ENCODE measurements at regions of chr1 and their contacts with region 1.

Region 1: DNA sequence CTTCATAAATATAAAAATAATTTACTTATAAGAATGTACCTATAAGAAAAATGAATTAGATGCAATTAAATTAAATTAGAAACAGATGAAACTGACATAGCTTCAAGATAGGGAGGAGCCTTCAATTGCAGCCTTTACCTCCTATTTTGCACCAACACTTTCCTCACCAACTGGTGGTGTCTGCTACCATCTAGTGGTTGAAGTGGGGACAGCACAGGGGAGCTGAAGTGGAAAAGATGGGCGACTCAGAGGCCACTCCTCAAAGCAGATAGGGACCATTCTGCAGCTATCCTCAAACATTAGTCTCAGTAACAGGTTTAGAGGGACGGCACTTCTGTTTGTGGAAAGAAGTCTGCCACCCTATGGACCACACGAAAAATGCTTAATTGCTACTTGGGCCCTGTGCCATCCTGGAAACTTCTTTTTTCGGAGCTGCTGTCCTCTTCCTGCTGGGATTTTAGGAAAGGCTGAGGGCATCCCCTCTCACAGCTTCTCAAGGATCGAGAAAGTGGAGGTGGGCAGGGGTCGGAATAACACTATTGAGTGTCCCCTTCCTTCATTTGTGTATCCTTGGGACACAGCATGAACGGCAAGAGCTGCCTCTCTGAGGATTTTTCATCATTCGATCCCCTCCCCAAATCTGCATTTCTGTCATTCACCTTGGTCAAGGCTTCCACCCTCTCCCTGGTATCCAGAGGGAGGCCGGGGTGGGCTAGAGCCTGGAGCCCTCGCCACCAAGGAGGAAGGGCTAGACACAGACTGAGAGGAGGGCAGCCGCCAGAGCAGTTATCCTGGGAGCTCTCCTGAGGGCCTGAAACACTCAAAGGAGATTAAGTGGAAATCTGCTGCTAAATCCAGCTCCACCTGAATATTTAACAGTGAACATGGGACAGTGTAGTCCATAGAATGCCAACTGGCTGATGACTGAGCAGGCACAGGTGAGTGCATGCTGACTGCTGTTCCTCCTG is 9.6 kb downstream of the PROK1 start:
- DNase-seq: peak in 1 of 2 donors; percentile 91
- H3K4me3 ChIP-seq: no peak overlapping the region
- H3K27ac ChIP-seq: no peak overlapping the region
- H3K4me1 ChIP-seq: no peaks in the 10 kb centered on the region
- H3K27me3 ChIP-seq: no peaks in the 10 kb centered on the region
- CTCF ChIP-seq: peak; percentile 92 to 96 (median 95)

Region 2: GRCh38 chr1:110203021-110203661 is 257.4 kb before region 1 on chr1:
- intact Hi-C with region 1: loop called (anchors 1 kb)
- DNase-seq: peak in 1 of 2 donors; percentile 81
- H3K4me3 ChIP-seq: no peak overlapping the region
- H3K27ac ChIP-seq: no peak overlapping the region
- H3K4me1 ChIP-seq: no peaks in the 10 kb centered on the region
- H3K27me3 ChIP-seq: no peaks in the 10 kb centered on the region
- CTCF ChIP-seq: peak; percentile 70 to 94 (median 79)

Region 3: DNA sequence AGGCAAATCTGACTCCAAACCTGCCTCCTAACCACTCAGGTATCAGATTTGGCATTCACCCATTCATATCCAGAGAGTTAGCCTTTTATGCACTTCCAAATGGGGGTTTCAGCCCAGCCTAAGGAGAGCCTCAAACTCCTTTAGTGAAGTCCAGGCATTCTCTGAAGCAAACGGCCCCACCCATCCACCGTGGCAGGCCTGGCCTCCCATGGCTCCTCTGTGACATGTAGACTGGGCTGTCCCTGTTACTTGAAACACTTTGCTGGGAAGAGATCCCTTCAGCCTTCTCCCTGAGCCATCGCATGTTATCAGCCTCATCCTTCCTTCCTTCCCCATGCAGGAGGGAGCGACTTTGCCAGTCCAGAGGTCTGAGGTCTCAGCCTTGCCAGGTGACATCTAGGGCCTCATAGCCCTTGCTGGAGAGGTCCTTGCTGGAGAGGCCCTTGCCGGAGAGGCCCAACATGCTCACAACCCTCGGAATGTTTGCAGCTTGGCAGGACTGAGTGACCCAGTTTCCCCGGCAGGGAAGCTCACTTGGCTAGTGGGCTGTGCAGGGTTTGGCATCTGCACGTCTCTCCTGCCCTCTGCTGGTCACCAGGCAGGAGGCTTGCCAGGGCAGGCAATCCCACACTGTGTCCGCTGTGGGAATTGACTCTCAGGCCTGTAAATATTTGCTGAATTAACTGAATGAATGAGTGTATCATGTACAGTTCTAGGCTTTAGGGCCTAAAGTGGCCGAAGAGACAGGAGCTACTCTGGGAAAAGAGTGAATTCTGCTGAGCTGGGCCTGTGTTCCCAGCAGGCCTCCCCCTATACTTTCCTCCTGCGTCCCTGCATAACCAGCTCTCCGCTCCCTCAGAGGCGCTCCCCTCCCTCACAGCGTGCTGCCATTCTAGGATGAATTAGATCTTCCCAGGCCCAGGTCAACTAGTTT is 148.1 kb before region 1 on chr1:
- intact Hi-C with region 1: loop called (anchors 1 kb)
- DNase-seq: peak; percentile 26 to 80
- H3K4me3 ChIP-seq: no peak overlapping the region
- H3K27ac ChIP-seq: no peak overlapping the region
- H3K4me1 ChIP-seq: no peaks in the 10 kb centered on the region
- H3K27me3 ChIP-seq: no peaks in the 10 kb centered on the region
- CTCF ChIP-seq: peak; percentile 83 to 92 (median 91)

Region 4: GRCh38 chr1:110340207-110340468 is 120.4 kb before region 1 on chr1:
- intact Hi-C with region 1: no loop called
- DNase-seq: peak in 1 of 2 donors; percentile 65
- H3K4me3 ChIP-seq: peak overlapping the region; percentile 81 to 96
- H3K27ac ChIP-seq: peak overlapping the region; percentile 83 to 94
- H3K4me1 ChIP-seq: peaks cover 19 to 33% of the 10 kb centered on the region in 2 donors
- H3K27me3 ChIP-seq: no peaks in the 10 kb centered on the region
- CTCF ChIP-seq: no peak

Region 5: DNA sequence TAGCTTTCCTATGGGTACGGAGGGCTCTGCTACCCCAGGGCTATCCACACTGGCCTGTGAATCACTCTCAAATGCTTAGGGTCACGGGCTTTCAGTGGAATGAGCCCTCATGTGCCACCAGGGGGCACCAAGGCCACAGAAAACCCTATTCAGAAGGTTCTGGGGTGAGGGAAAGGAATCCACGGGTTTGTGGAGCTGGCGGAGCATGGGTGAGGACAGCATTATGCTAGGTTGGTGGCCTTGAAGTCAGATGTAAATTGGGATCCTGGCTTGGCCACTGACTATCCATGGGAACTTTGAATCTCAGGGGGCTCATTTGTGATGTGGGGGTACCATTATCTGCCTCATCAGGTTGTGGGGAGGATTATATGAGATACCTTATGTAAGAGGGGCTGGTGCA is 48.0 kb before region 1 on chr1:
- intact Hi-C with region 1: loop called (anchors 1 kb)
- DNase-seq: peak in 1 of 2 donors; percentile 80
- H3K4me3 ChIP-seq: no peak overlapping the region
- H3K27ac ChIP-seq: no peak overlapping the region
- H3K4me1 ChIP-seq: peaks cover 3 to 7% of the 10 kb centered on the region in 2 donors
- H3K27me3 ChIP-seq: no peaks in the 10 kb centered on the region
- CTCF ChIP-seq: peak; percentile 47 to 72 (median 55)